Right ventricle myocardium inferior (tissue), 1 donor: ENCODE measurements at regions of chr15 and their contacts with region 1.

Region 1: DNA sequence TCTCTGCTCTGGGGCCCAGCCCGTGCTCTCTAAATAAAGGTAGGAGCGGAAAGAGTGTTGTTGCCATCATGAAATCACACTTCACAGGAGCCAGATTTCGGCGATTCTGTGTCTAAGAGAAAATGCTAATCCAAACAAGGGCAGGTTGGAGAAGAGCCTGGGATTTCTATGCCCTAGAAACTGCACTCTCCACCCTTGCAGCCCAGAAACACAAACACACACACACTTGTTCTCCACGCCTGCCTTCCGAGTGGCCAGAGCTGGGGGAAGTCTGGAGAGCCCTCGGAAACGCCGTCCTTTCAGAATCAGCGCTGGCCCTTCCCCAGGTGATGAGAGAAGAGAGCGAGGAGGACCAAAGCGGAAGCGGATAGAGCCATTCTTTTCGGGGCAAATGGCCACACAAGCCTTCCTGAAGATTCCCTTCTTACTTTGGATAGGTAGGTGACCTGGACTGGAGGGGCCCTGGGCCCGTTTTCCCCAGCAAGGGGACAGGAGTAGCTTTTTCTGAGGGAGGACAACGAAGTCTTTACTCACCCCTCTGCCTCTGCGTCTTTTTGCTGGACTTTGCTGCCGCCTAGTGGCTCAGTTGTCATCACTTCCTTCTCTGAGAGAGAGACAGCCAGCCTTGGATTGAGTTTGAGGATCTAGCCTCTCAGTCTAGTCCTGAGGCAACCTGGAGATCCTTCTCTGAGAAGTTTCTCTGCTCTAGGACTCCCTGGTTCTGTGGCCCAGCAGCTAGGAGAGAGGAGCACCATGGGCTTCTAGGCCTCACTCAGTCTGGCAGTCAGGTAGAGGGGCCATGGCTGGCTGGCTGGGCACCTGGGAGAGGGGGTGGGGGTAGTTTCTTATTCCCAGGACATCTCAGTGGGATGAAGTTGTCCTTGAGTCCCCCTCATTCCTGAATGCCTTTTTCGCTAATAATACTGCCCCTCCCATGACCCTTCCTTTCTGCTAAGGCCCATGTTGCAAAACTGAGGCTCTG is 37.7 kb downstream of the SENP8 start:
- DNase-seq: peak; percentile 84
- ATAC-seq: peak; percentile 91

Region 2: GRCh38 chr15:71743861-71744382 is 412.0 kb before region 1 on chr15:
- intact Hi-C with region 1: loop called (anchors 5 kb)
- DNase-seq: no peak
- ATAC-seq: no peak

Region 3: GRCh38 chr15:71891026-71891425 is 264.9 kb before region 1 on chr15:
- intact Hi-C with region 1: loop called (anchors 5 kb)
- DNase-seq: no peak
- ATAC-seq: peak; percentile 90

Region 4: DNA sequence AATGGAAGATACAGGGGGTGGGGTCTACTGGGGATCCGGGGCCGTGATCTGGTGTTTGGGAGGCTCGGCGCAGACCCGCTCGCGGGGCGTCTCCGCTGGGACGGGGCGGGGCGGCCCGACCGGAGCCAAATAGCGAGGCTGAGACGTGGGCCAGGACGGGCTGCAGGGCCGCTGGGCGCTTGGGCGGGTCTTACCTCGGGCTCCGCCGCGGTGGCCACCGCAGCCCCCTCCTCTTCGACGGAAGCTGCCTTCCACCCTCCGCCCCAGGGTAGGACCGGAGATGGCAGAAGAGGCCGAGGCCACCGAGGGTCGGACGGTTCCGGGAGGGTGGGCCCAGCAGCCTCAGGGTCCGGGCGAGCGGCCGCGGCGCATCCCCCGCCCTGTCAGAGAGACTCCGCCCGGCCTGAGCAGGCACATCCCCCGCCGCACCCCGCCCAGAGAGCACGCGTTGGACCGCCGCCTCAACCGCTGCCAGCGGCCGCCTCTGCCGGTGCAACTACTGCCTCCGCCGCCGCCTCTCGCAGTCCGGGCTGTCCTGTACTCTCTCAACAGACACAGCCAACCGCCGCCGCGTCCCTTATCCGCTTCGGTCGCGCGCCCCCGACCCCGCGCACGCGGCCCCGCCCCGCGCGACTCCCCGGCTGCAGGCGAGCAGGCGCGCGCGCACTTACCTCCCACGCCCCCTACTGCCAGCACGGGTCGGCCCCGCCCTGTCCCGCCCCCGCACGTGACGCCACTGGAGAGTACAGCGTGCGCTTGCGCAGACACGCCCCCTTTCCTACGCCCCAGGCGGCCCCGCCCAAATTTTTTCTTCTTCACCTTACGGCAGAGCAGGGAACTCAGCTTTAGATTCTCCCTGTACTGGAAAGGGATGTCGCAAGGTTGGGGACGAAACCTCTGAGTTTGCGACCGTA is 38.2 kb before region 1 on chr15 and contains the start of gene MYO9A:
- intact Hi-C with region 1: loop called (anchors 5 kb)
- DNase-seq: peak; percentile 98
- ATAC-seq: peak; percentile 92
- total RNA-seq, gene MYO9A: 27.5 TPM

Region 5: GRCh38 chr15:72195101-72195511 is 39.2 kb after region 1 on chr15:
- intact Hi-C with region 1: no loop called
- DNase-seq: peak; percentile 70
- ATAC-seq: no peak

Region 6: DNA sequence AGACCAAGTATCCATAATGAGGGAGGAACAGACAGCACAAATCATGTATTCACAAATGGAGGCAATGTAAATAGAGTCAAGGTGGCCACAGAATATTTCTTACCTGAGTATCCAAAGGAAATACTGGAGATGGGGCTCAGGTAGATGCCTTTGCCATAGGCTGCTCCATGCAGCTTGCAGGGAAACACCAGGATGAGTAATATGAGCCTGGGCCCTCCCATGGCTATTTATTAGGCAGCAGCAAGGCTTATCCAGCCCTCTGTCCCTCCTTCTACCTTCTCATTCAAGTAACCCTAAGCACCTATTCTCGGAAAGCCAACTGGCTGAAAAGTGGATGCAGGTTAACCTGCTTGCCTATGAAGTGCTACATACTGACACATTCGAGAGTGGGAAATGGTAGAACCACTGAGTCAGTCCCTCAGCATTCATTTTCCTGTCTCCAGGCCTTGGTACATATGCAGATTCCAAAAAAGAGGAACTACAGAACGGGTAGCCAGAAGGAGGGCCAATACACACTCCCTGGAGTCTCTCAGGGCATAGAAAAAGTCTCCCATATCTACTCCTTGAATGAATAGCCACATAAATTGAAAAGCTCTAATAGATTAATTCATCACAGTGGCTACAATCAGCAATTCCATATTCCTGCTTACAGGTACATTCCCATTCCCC is 93.3 kb after region 1 on chr15:
- intact Hi-C with region 1: no loop called
- DNase-seq: no peak
- ATAC-seq: no peak